ENCODE measurements at regions of chr20 and their contacts with region 1.

Region 1: DNA sequence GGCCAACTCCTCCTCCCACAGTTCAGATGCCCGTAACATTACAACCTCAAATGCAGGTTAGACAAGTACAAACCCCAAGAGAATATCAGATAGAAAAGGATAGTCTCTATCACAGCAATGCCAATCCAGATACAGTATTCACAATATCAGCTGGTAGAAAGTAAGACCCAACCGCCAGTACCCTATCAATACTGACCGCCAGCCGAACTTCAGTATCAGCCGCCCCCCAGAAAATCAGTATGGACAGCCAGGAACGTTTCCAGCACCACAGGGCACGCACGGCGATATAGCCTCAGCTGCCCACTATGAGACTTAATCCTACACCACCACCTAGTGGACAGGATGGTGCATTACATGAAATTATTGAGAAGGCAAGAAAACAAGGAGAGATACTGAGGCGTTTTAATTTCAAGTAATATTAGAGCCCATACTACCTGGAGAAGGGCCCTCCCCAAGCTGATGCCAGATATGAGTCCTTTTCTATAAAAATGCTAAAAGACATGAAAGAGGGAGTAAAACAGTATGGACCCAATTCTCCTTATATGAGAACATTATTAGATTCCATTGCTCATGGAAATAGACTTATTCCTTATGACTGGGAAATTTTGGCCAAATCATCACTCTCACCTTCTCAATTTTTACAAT is 17.6 kb upstream of the EIF2S2 start:
- DNase-seq: peak; percentile 8 to 86 (median 39)
- ATAC-seq: peak; percentile 96
- H3K4me3 ChIP-seq: no peak overlapping the region
- H3K4me3 Mint-ChIP-seq: no peak overlapping the region
- H3K27ac ChIP-seq: no peak overlapping the region
- H3K27ac Mint-ChIP-seq: no peak overlapping the region
- H3K4me1 ChIP-seq: peaks cover 4% of the 10 kb centered on the region
- H3K4me1 Mint-ChIP-seq: no peaks in the 10 kb centered on the region
- H3K27me3 ChIP-seq: no peaks in the 10 kb centered on the region
- H3K27me3 Mint-ChIP-seq: peaks cover 12% of the 10 kb centered on the region
- CTCF ChIP-seq: peak; percentile 93

Region 2: GRCh38 chr20:33791959-33792597 is 337.6 kb before region 1 on chr20:
- CTCF ChIA-PET with region 1: interaction called, 5 read pairs
- POLR2A ChIA-PET with region 1: no interaction called
- intact Hi-C with region 1: loop called (anchors 1 kb)
- DNase-seq: peak; percentile 27 to 68 (median 40)
- ATAC-seq: peak; percentile 65
- H3K4me3 ChIP-seq: no peak overlapping the region
- H3K4me3 Mint-ChIP-seq: no peak overlapping the region
- H3K27ac ChIP-seq: no peak overlapping the region
- H3K27ac Mint-ChIP-seq: no peak overlapping the region
- H3K4me1 ChIP-seq: peaks cover 8% of the 10 kb centered on the region
- H3K4me1 Mint-ChIP-seq: peaks cover 9% of the 10 kb centered on the region
- H3K27me3 ChIP-seq: no peaks in the 10 kb centered on the region
- H3K27me3 Mint-ChIP-seq: no peaks in the 10 kb centered on the region
- CTCF ChIP-seq: peak; percentile 83

Region 3: GRCh38 chr20:33915726-33916331 is 213.8 kb before region 1 on chr20:
- CTCF ChIA-PET with region 1: interaction called, 5 read pairs
- POLR2A ChIA-PET with region 1: interaction called, 4 read pairs
- intact Hi-C with region 1: loop called (anchors 1 kb)
- DNase-seq: peak; percentile 30 to 73 (median 42)
- ATAC-seq: peak; percentile 39
- H3K4me3 ChIP-seq: no peak overlapping the region
- H3K4me3 Mint-ChIP-seq: no peak overlapping the region
- H3K27ac ChIP-seq: no peak overlapping the region
- H3K27ac Mint-ChIP-seq: no peak overlapping the region
- H3K4me1 ChIP-seq: peaks cover 5% of the 10 kb centered on the region
- H3K4me1 Mint-ChIP-seq: peaks cover 15% of the 10 kb centered on the region
- H3K27me3 ChIP-seq: no peaks in the 10 kb centered on the region
- H3K27me3 Mint-ChIP-seq: no peaks in the 10 kb centered on the region
- CTCF ChIP-seq: peak; percentile 67

Region 4: DNA sequence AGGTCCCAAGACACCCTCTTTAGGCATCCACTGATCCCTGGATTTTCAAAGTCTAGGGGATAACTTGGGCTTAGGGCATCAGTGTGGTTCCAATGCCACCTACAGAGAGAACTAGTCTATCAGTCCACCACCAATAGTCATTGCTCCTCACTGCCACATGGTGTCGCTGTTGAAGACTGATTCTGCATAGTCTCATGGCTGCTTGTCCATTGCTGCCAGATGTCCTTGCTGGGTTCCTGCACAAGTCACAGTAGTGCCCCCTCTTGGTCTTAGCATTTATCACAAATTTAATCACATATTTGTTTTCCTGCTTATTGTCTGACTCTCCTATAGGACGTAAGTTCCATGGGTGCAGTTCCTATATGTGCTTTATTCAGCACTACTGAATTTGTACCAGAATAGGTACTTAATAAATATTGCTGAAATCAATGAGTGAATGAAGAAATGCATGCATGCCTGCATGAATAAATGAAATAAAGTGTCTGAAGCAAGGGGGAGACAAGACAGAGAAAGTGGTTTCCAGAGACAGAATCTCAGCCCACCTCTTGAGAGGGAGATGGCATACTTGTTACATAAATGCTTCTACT is 181.8 kb before region 1 on chr20:
- CTCF ChIA-PET with region 1: no interaction called
- POLR2A ChIA-PET with region 1: no interaction called
- intact Hi-C with region 1: loop called in 1 of 2 experiments (anchors 1 kb)
- DNase-seq: peak in 12 of 14 experiments; percentile 3 to 71 (median 14)
- ATAC-seq: peak; percentile 56
- H3K4me3 ChIP-seq: no peak overlapping the region
- H3K4me3 Mint-ChIP-seq: no peak overlapping the region
- H3K27ac ChIP-seq: no peak overlapping the region
- H3K27ac Mint-ChIP-seq: no peak overlapping the region
- H3K4me1 ChIP-seq: no peaks in the 10 kb centered on the region
- H3K4me1 Mint-ChIP-seq: no peaks in the 10 kb centered on the region
- H3K27me3 ChIP-seq: no peaks in the 10 kb centered on the region
- H3K27me3 Mint-ChIP-seq: no peaks in the 10 kb centered on the region
- CTCF ChIP-seq: peak; percentile 51

Region 5: GRCh38 chr20:34334654-34335407 is 205.2 kb after region 1 on chr20:
- CTCF ChIA-PET with region 1: no interaction called
- POLR2A ChIA-PET with region 1: no interaction called
- intact Hi-C with region 1: no loop called
- DNase-seq: no peak
- ATAC-seq: no peak
- H3K4me3 ChIP-seq: no peak overlapping the region
- H3K4me3 Mint-ChIP-seq: no peak overlapping the region
- H3K27ac ChIP-seq: no peak overlapping the region
- H3K27ac Mint-ChIP-seq: no peak overlapping the region
- H3K4me1 ChIP-seq: no peaks in the 10 kb centered on the region
- H3K4me1 Mint-ChIP-seq: no peaks in the 10 kb centered on the region
- H3K27me3 ChIP-seq: no peaks in the 10 kb centered on the region
- H3K27me3 Mint-ChIP-seq: no peaks in the 10 kb centered on the region
- CTCF ChIP-seq: no peak